ENCODE measurements at regions of chr1 and their contacts with region 1.

Region 1: DNA sequence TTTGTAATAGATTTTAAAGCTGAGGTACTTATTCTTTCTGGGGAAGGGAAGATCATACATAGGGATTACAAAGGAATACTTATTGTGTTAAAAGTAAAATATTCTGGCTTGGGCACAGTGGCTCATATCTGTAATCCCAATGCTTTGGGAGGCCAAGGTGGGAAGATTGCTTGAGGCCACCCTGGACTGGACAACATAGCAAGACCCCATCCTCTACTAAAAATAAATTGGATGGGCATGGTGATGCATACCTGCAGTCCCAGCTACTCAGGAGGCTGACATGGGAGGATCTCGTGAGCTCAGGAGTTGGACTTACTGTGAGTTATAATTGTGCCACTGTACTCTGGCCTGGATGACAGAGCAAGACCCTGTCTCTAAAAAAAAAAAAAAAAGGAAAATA is 27.6 kb downstream of the GABPB2 start:
- DNase-seq: no peak
- H3K4me3 ChIP-seq: no peak overlapping the region
- H3K27ac ChIP-seq: no peak overlapping the region
- H3K4me1 ChIP-seq: no peaks in the 10 kb centered on the region
- H3K27me3 ChIP-seq: no peaks in the 10 kb centered on the region
- CTCF ChIP-seq: no peak

Region 2: DNA sequence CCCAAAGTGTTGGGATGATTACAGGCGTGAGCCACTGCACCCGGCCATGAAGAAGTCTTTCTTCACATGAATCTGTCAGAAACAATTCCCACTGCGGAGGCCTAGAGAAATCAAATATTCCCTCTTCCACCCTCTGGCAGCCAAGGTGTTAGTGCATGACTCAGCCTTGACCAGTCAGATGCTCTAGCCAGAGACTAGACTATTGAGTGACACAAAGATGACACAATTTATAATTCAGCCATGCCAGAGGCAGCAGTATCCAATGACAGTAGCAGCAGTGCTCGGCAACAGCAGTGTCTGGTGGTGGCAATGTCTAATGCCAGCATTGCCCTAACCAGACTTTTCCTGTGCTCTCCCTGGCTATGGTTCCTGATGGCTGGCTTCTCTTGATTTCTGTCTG is 202.5 kb before region 1 on chr1:
- CTCF ChIA-PET with region 1: interaction called, 15 read pairs
- POLR2A ChIA-PET with region 1: no interaction called
- intact Hi-C with region 1: no loop called
- DNase-seq: no peak
- H3K4me3 ChIP-seq: no peak overlapping the region
- H3K27ac ChIP-seq: no peak overlapping the region
- H3K4me1 ChIP-seq: no peaks in the 10 kb centered on the region
- H3K27me3 ChIP-seq: no peaks in the 10 kb centered on the region
- CTCF ChIP-seq: no peak

Region 3: GRCh38 chr1:151070474-151071276 is 27.5 kb before region 1 on chr1 and contains the start of gene GABPB2:
- CTCF ChIA-PET with region 1: interaction called, 11 read pairs
- POLR2A ChIA-PET with region 1: no interaction called
- intact Hi-C with region 1: no loop called
- DNase-seq: peak; percentile 96
- H3K4me3 ChIP-seq: peak within 1 kb of the TSS; percentile 70
- H3K27ac ChIP-seq: peak within 1 kb of the TSS; percentile 94
- H3K4me1 ChIP-seq: peaks cover 8% of the 10 kb centered on the region
- H3K27me3 ChIP-seq: no peaks in the 10 kb centered on the region
- CTCF ChIP-seq: peak; percentile 93
- total RNA-seq, gene GABPB2: 11.1 and 12.5 TPM in 2 replicates

Region 4: GRCh38 chr1:151156515-151156819 is 58.3 kb after region 1 on chr1 and contains the start of gene TNFAIP8L2:
- CTCF ChIA-PET with region 1: interaction called, 21 read pairs
- POLR2A ChIA-PET with region 1: no interaction called
- intact Hi-C with region 1: loop called (anchors 2 kb)
- DNase-seq: no peak
- H3K4me3 ChIP-seq: no peak within 1 kb of the TSS
- H3K27ac ChIP-seq: no peak within 1 kb of the TSS
- H3K4me1 ChIP-seq: no peaks in the 10 kb centered on the region
- H3K27me3 ChIP-seq: no peaks in the 10 kb centered on the region
- CTCF ChIP-seq: no peak
- total RNA-seq, gene TNFAIP8L2: not detected in 2 replicates

Region 5: DNA sequence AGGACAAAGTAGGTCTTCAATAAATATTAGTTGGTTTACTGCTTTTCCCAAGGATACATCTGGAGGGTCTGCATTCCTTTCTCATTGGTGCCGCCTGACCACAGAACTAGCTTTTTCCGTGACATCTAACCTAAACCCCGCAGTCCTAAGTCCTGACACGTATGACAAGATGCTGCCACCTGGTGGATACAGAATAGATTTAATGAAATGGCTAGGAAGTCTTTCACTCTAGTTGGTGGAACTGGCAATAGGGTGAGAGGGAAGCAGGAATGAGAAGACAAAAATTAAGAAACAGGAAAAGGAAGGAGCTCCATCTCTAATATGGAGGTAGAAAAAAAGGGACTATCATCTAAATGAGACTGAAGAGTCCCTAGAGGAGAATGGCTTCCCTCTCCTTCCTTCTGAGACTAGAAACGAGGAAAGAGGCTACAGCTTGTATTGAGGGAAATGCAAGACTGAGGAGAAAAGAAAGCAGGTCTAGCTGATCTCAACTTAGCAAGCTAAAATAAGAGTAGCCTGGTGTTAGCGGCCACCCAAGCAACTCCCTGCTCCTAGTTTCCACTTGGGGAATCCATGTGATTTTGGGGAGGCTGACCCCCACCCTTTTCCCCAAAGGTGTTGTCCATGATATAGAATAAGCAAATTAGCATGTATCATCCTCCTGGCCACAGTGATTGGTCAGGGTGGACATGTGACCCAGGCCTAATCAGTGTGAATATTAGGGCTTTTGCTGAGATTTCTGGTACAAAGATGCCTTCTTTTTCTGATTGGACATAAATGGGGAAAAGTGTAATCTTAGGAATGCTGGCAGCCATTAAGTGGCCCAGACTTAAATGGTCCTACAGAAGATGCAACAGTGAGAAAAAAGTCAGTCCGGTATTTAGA is 243.0 kb after region 1 on chr1:
- CTCF ChIA-PET with region 1: interaction called, 24 read pairs
- POLR2A ChIA-PET with region 1: no interaction called
- intact Hi-C with region 1: loop called (anchors 5 kb)
- DNase-seq: peak; percentile 88
- H3K4me3 ChIP-seq: no peak overlapping the region
- H3K27ac ChIP-seq: no peak overlapping the region
- H3K4me1 ChIP-seq: peaks cover 10% of the 10 kb centered on the region
- H3K27me3 ChIP-seq: no peaks in the 10 kb centered on the region
- CTCF ChIP-seq: peak; percentile 81